ENCODE measurements at regions of chr15 and their contacts with region 1.

Region 1: GRCh38 chr15:78131295-78132061 is at the start of gene CIB2:
- DNase-seq: peak; percentile 79
- ATAC-seq: peak; percentile 90
- H3K4me3 Mint-ChIP-seq: peak within 1 kb of the TSS; percentile 78
- H3K27ac Mint-ChIP-seq: peak within 1 kb of the TSS; percentile 73
- H3K4me1 Mint-ChIP-seq: peaks cover 24% of the 10 kb centered on the region
- H3K27me3 Mint-ChIP-seq: no peaks in the 10 kb centered on the region
- total RNA-seq, gene CIB2: 1.4 to 2.2 TPM

Region 2: DNA sequence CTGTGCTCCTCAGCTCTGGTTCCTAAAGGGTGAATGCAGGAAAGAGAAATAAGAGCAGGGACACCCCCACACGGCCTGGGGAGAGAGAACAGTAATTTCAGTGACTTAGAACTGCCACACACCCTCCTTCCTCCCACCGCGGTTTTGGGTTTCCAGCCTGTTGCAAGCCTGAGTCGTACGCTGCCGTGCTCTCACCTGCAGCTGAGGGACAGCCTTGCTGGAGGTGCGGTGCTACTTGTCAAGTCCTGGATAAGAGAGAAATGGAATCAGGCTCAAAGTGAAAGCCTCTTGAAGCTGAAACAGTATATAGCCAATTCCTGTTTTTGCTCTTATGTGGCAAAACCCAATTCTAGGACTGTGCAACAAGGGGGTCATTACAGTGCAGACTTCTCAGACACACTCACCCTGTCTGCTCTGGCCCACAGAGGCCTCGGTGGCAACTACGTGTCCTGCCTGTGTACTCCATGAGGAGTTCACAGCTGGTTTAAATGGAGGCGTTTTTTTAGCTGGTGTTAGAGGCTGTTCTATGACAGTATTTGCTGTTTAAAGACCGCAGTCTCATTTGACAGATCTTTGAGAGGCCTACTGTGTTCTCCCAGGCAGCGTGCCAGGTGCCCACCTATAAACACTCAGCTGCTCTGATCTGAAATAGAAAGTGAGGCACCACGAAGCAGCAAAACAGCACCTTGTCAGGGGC is 96.8 kb before region 1 on chr15:
- CTCF ChIA-PET with region 1: no interaction called
- POLR2A ChIA-PET with region 1: no interaction called
- DNase-seq: peak; percentile 90
- ATAC-seq: peak; percentile 91
- H3K4me3 Mint-ChIP-seq: peak overlapping the region; percentile 64
- H3K27ac Mint-ChIP-seq: peak overlapping the region; percentile 79
- H3K4me1 Mint-ChIP-seq: peaks cover 88% of the 10 kb centered on the region
- H3K27me3 Mint-ChIP-seq: no peaks in the 10 kb centered on the region

Region 3: GRCh38 chr15:78077058-78077877 is 54.2 kb before region 1 on chr15 and contains the start of gene TBC1D2B:
- CTCF ChIA-PET with region 1: no interaction called
- POLR2A ChIA-PET with region 1: no interaction called
- DNase-seq: peak; percentile 69
- ATAC-seq: peak; percentile 83
- H3K4me3 Mint-ChIP-seq: peak within 1 kb of the TSS; percentile 100
- H3K27ac Mint-ChIP-seq: peak within 1 kb of the TSS; percentile 94
- H3K4me1 Mint-ChIP-seq: peaks cover 50% of the 10 kb centered on the region
- H3K27me3 Mint-ChIP-seq: no peaks in the 10 kb centered on the region
- total RNA-seq, gene TBC1D2B: 109 to 119 TPM

Region 4: DNA sequence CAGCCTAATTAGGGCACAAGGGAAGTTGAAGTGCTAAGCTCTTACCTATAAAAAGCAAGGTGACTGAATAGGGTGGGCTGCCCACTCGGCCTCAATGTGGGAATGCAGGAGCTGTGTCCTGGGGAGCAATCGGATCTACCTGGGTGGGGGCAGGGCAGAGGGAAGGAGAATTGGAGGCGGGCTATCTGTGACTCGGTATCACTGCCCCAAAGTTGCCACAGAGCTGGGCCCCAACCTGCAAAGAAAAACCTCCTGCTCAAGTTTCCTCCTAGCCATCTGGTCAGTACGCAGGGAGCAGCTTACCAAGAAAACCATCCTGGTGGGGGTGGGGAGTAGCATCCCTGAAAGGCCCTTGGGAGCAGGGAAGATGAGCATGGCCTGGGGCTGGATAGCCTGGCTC is 11.0 kb before region 1 on chr15:
- CTCF ChIA-PET with region 1: interaction called, 20 read pairs
- POLR2A ChIA-PET with region 1: no interaction called
- DNase-seq: no peak
- ATAC-seq: no peak
- H3K4me3 Mint-ChIP-seq: no peak overlapping the region
- H3K27ac Mint-ChIP-seq: no peak overlapping the region
- H3K4me1 Mint-ChIP-seq: no peaks in the 10 kb centered on the region
- H3K27me3 Mint-ChIP-seq: no peaks in the 10 kb centered on the region

Region 5: GRCh38 chr15:78149068-78149804 is 17.8 kb after region 1 on chr15 and contains the start of gene IDH3A:
- CTCF ChIA-PET with region 1: interaction called, 26 read pairs
- POLR2A ChIA-PET with region 1: interaction called, 21 read pairs
- DNase-seq: peak; percentile 100
- ATAC-seq: peak; percentile 96
- H3K4me3 Mint-ChIP-seq: peak within 1 kb of the TSS; percentile 94
- H3K27ac Mint-ChIP-seq: peak within 1 kb of the TSS; percentile 92
- H3K4me1 Mint-ChIP-seq: peaks cover 48% of the 10 kb centered on the region
- H3K27me3 Mint-ChIP-seq: no peaks in the 10 kb centered on the region
- total RNA-seq, gene IDH3A: 80.7 to 84.2 TPM

Region 6: GRCh38 chr15:78155355-78155939 is 24.0 kb after region 1 on chr15:
- CTCF ChIA-PET with region 1: interaction called, 26 read pairs
- POLR2A ChIA-PET with region 1: no interaction called
- DNase-seq: no peak
- ATAC-seq: no peak
- H3K4me3 Mint-ChIP-seq: no peak overlapping the region
- H3K27ac Mint-ChIP-seq: no peak overlapping the region
- H3K4me1 Mint-ChIP-seq: peaks cover 22% of the 10 kb centered on the region
- H3K27me3 Mint-ChIP-seq: no peaks in the 10 kb centered on the region

Region 7: GRCh38 chr15:78170848-78171773 is 39.6 kb after region 1 on chr15:
- CTCF ChIA-PET with region 1: interaction called, 10 read pairs
- POLR2A ChIA-PET with region 1: no interaction called
- DNase-seq: no peak
- ATAC-seq: no peak
- H3K4me3 Mint-ChIP-seq: no peak overlapping the region
- H3K27ac Mint-ChIP-seq: peak overlapping the region; percentile 8
- H3K4me1 Mint-ChIP-seq: peaks cover 68% of the 10 kb centered on the region
- H3K27me3 Mint-ChIP-seq: peaks cover 2% of the 10 kb centered on the region

Region 8: GRCh38 chr15:78204351-78205309 is 73.2 kb after region 1 on chr15:
- CTCF ChIA-PET with region 1: interaction called, 211 read pairs
- POLR2A ChIA-PET with region 1: no interaction called
- DNase-seq: no peak
- ATAC-seq: no peak
- H3K4me3 Mint-ChIP-seq: no peak overlapping the region
- H3K27ac Mint-ChIP-seq: no peak overlapping the region
- H3K4me1 Mint-ChIP-seq: no peaks in the 10 kb centered on the region
- H3K27me3 Mint-ChIP-seq: no peaks in the 10 kb centered on the region